ENCODE measurements at regions of chrX and their contacts with region 1.

Region 1: DNA sequence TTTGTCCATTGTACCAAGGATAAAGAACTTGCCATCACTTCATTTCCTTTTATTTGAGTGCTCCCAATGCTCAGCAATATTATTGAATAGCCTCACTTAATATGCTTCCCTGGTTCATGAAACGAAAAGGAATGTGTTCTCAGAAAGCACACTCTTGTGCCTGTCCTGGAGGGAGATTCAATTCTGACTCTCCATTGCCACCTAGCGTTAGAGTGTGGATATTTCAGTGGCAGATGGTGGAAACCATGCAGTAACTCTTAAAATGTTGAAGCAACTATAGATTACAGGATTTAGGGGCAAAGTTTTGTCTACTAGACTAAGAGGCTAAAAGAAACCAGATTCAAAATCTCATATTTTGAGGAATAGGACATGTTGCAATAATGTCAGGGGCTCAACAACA is 36.0 kb downstream of the GAB3 start:
- DNase-seq: peak in 5 of 9 experiments; percentile 34 to 74 (median 59)
- ATAC-seq: peak; percentile 32
- H3K4me3 ChIP-seq: no peak overlapping the region
- H3K4me3 Mint-ChIP-seq: no peak overlapping the region
- H3K27ac ChIP-seq: no peak overlapping the region
- H3K27ac Mint-ChIP-seq: no peak overlapping the region
- H3K4me1 ChIP-seq: peaks cover 48% of the 10 kb centered on the region
- H3K4me1 Mint-ChIP-seq: peaks cover 64% of the 10 kb centered on the region
- H3K27me3 ChIP-seq: no peaks in the 10 kb centered on the region
- H3K27me3 Mint-ChIP-seq: no peaks in the 10 kb centered on the region
- CTCF ChIP-seq: peak; percentile 65

Region 2: GRCh38 chrX:154727871-154728270 is 12.9 kb after region 1 on chrX:
- CTCF ChIA-PET with region 1: interaction called, 23 read pairs
- POLR2A ChIA-PET with region 1: interaction called, 11 read pairs
- intact Hi-C with region 1: loop called in 1 of 2 experiments (anchors 2 kb)
- DNase-seq: no peak
- ATAC-seq: no peak
- H3K4me3 ChIP-seq: no peak overlapping the region
- H3K4me3 Mint-ChIP-seq: no peak overlapping the region
- H3K27ac ChIP-seq: peak overlapping the region in 1 of 2 experiments; percentile 60
- H3K27ac Mint-ChIP-seq: peak overlapping the region; percentile 45
- H3K4me1 ChIP-seq: peaks cover 53% of the 10 kb centered on the region
- H3K4me1 Mint-ChIP-seq: peaks cover 94% of the 10 kb centered on the region
- H3K27me3 ChIP-seq: no peaks in the 10 kb centered on the region
- H3K27me3 Mint-ChIP-seq: no peaks in the 10 kb centered on the region
- CTCF ChIP-seq: no peak

Region 3: DNA sequence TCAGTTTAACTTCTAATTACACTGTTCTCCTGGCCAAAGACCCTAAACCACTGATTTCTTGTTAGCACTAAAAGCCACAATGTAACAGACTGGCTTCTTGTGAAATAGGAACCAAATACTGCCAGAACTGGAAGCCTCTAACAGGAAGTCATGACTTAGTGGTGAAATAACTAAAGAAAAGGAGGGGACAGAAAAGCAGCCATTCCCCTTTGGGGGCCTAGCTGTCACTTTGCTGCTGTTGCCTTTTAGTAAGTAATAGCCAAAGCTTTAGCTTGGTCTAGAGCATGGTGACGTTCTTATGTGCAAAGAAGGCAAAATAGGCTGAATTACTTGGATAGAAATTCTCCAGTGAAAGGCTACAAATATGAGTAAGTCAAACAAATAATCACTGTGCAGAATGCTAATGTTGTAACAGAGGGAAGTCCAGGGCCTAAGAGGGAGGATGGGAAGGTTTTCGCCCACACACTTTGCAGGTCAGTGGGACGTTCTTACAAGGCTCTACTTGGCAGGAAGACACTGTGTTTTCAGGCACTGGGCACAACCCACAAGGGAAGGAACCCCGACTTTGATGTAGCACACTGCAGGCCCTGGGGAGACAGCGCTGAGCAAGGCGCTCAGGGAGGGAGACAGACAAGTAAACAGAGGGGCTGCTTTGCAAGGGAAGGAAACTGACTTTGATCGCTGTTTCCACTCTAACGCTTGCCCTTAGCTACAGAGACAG is 19.3 kb after region 1 on chrX:
- CTCF ChIA-PET with region 1: interaction called, 23 read pairs
- POLR2A ChIA-PET with region 1: interaction called, 11 read pairs
- intact Hi-C with region 1: loop called in 1 of 2 experiments (anchors 2 kb)
- DNase-seq: peak in 6 of 9 experiments; percentile 49 to 79 (median 63)
- ATAC-seq: peak; percentile 63
- H3K4me3 ChIP-seq: peak overlapping the region; percentile 24 to 44
- H3K4me3 Mint-ChIP-seq: peak overlapping the region; percentile 65
- H3K27ac ChIP-seq: peak overlapping the region; percentile 56 to 84
- H3K27ac Mint-ChIP-seq: peak overlapping the region; percentile 97
- H3K4me1 ChIP-seq: peaks cover 97% of the 10 kb centered on the region
- H3K4me1 Mint-ChIP-seq: peaks cover 92% of the 10 kb centered on the region
- H3K27me3 ChIP-seq: no peaks in the 10 kb centered on the region
- H3K27me3 Mint-ChIP-seq: no peaks in the 10 kb centered on the region
- CTCF ChIP-seq: no peak

Region 4: GRCh38 chrX:154748712-154749343 is 33.9 kb after region 1 on chrX:
- CTCF ChIA-PET with region 1: interaction called, 27 read pairs
- POLR2A ChIA-PET with region 1: interaction called, 9 read pairs
- intact Hi-C with region 1: loop called (anchors 1 to 2 kb)
- DNase-seq: peak in 7 of 9 experiments; percentile 21 to 83 (median 57)
- ATAC-seq: peak; percentile 71
- H3K4me3 ChIP-seq: peak overlapping the region in 1 of 2 experiments; percentile 75
- H3K4me3 Mint-ChIP-seq: peak overlapping the region; percentile 54
- H3K27ac ChIP-seq: peak overlapping the region in 1 of 2 experiments; percentile 40
- H3K27ac Mint-ChIP-seq: peak overlapping the region; percentile 64
- H3K4me1 ChIP-seq: peaks cover 16% of the 10 kb centered on the region
- H3K4me1 Mint-ChIP-seq: peaks cover 41% of the 10 kb centered on the region
- H3K27me3 ChIP-seq: no peaks in the 10 kb centered on the region
- H3K27me3 Mint-ChIP-seq: no peaks in the 10 kb centered on the region
- CTCF ChIP-seq: peak; percentile 64

Region 5: DNA sequence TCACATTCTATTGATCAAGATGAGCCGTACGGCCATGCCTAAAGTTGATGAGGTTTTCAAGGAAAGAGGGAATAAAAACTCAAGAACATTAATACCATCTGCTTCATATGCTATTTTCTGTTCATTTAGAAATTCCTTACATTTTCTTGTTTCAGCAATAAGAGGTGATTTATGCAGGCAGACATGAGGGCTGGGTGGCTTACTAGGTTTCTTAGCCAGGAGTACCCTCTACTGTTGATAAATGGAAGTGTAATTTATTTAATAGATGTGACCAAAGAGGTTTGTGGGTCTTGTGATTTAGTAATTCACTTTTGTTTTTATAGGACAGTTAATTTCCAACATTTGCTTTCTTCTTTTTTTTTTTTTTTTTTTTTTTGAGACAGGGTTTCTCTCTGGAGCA is 125.9 kb after region 1 on chrX:
- CTCF ChIA-PET with region 1: no interaction called
- POLR2A ChIA-PET with region 1: no interaction called
- intact Hi-C with region 1: loop called in 1 of 2 experiments (anchors 10 kb)
- DNase-seq: peak in 3 of 9 experiments; percentile 16 to 65 (median 53)
- ATAC-seq: peak; percentile 66
- H3K4me3 ChIP-seq: no peak overlapping the region
- H3K4me3 Mint-ChIP-seq: no peak overlapping the region
- H3K27ac ChIP-seq: no peak overlapping the region
- H3K27ac Mint-ChIP-seq: no peak overlapping the region
- H3K4me1 ChIP-seq: no peaks in the 10 kb centered on the region
- H3K4me1 Mint-ChIP-seq: no peaks in the 10 kb centered on the region
- H3K27me3 ChIP-seq: no peaks in the 10 kb centered on the region
- H3K27me3 Mint-ChIP-seq: no peaks in the 10 kb centered on the region
- CTCF ChIP-seq: peak; percentile 58

Region 6: GRCh38 chrX:155086202-155086840 is 371.4 kb after region 1 on chrX:
- CTCF ChIA-PET with region 1: no interaction called
- POLR2A ChIA-PET with region 1: no interaction called
- intact Hi-C with region 1: no loop called
- DNase-seq: peak in 7 of 9 experiments; percentile 20 to 61 (median 34)
- ATAC-seq: peak; percentile 36
- H3K4me3 ChIP-seq: no peak overlapping the region
- H3K4me3 Mint-ChIP-seq: no peak overlapping the region
- H3K27ac ChIP-seq: no peak overlapping the region
- H3K27ac Mint-ChIP-seq: no peak overlapping the region
- H3K4me1 ChIP-seq: no peaks in the 10 kb centered on the region
- H3K4me1 Mint-ChIP-seq: peaks cover 2% of the 10 kb centered on the region
- H3K27me3 ChIP-seq: no peaks in the 10 kb centered on the region
- H3K27me3 Mint-ChIP-seq: no peaks in the 10 kb centered on the region
- CTCF ChIP-seq: peak; percentile 31

Region 7: DNA sequence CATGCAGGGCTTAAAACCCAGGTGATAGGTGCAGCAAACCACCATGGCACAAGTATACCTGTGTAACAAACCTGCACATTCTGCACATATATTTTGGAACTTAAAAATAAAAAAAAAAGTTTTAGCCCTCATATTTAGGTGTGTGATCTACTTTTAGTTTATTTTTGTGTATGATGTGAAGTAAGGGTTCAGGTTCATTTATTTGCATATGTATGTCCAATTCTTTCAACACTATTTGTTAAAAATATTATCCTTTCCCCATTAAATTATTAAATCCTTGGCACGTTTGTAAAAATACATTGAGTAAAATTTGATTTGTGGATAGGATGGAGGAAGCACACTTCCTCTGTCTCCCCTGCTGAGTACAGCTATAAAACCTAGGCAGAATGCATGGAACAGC is 536.5 kb after region 1 on chrX:
- CTCF ChIA-PET with region 1: no interaction called
- POLR2A ChIA-PET with region 1: no interaction called
- intact Hi-C with region 1: no loop called
- DNase-seq: no peak
- ATAC-seq: no peak
- H3K4me3 ChIP-seq: no peak overlapping the region
- H3K4me3 Mint-ChIP-seq: no peak overlapping the region
- H3K27ac ChIP-seq: no peak overlapping the region
- H3K27ac Mint-ChIP-seq: no peak overlapping the region
- H3K4me1 ChIP-seq: no peaks in the 10 kb centered on the region
- H3K4me1 Mint-ChIP-seq: peaks cover 1% of the 10 kb centered on the region
- H3K27me3 ChIP-seq: no peaks in the 10 kb centered on the region
- H3K27me3 Mint-ChIP-seq: no peaks in the 10 kb centered on the region
- CTCF ChIP-seq: no peak

Measured in CD8-positive, alpha-beta T cell (primary cell).